IMR-90 (cell line): ENCODE measurements at regions of chr3 and their contacts with region 1.

Region 1: DNA sequence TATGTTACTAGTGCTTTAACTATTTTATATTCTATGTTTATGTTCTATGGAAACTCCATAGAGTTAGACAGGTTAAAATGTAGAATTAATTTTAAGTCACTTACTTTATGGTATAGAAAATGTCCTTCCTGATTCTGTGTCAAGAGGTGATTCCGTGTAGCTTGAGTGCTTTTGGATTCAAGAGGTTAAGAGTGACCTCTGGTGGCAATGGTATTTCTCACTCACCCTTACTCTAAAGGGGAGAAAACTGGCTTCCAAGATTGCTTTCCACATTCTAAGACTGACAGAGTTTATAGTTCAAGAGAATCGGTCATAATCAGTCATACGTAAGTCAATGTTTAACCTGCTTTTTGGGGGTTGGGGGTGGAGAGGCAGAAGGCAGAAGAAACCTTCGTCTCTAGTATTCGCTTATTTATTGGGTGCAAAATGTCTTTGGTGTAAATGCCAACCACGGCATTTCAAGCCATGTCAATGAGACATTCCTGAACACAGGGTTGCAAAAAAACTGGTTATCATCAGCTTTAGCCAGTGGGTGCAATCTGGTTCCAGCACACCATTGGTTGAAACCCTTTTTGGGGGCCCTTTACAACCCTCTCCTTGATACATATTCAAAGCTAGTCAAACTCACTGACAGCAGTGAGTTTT is 92.0 kb upstream of the VGLL3 start:
- DNase-seq: peak; percentile 75
- ATAC-seq: peak; percentile 98
- H3K4me3 ChIP-seq: no peak overlapping the region
- H3K27ac ChIP-seq: no peak overlapping the region
- H3K4me1 ChIP-seq: no peaks in the 10 kb centered on the region
- H3K27me3 ChIP-seq: no peaks in the 10 kb centered on the region
- CTCF ChIP-seq: peak; percentile 86
- POLR2A ChIP-seq: no peak
- RAD21 ChIP-seq: peak; percentile 89

Region 2: DNA sequence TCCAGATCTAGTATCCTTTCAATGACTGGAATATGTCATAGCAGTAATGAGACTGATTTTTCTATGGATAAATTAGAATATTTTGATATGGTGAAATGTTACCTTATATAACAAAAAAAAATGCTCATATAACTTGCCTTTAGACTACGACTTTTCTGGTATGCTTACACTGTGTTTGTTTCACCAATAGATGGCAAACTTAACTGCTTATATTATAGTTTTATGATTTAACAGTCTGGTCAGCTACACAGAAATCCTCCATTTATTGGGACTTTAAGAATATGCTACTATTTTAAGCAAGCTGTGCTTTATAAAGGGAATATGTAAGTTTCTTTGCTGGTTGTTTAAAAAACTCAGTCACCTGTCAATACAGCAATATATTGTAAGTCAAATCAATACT is 297.5 kb before region 1 on chr3:
- CTCF ChIA-PET with region 1: interaction called, 4 read pairs
- POLR2A ChIA-PET with region 1: interaction called, 3 read pairs
- dilution Hi-C with region 1: no loop called
- in situ Hi-C with region 1: loop called (anchors 5 kb)
- intact Hi-C with region 1: loop called (anchors 1 kb)
- DNase-seq: peak; percentile 72
- ATAC-seq: peak; percentile 93
- H3K4me3 ChIP-seq: no peak overlapping the region
- H3K27ac ChIP-seq: no peak overlapping the region
- H3K4me1 ChIP-seq: peaks cover 4% of the 10 kb centered on the region
- H3K27me3 ChIP-seq: no peaks in the 10 kb centered on the region
- CTCF ChIP-seq: peak; percentile 70
- POLR2A ChIP-seq: no peak
- RAD21 ChIP-seq: peak; percentile 73

Region 3: DNA sequence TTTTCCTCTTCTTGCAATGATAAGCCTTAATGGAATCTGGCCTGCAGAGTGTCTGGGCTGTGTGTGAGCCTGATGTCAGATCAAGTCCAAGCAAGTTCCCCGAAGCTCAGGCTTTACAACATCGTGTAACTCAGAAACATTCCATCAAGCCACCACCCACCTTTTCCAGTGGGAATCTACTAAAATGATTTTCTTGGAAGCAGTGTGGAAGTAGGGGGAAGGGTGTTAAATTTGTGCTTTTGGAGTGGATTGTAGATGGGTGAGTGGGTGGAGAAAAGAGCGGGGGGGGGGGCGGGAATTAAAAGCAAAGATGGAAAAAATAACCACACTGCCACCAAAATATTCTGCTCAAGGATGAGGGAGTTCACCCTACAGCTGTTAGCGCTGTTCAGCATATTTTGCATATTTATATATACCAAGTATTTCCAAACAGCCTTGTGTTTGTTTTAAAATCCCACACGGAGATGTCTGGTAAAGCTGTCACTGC is 145.6 kb before region 1 on chr3:
- CTCF ChIA-PET with region 1: no interaction called
- POLR2A ChIA-PET with region 1: no interaction called
- dilution Hi-C with region 1: no loop called
- in situ Hi-C with region 1: no loop called
- intact Hi-C with region 1: loop called (anchors 1 kb)
- DNase-seq: peak; percentile 92
- ATAC-seq: peak; percentile 76
- H3K4me3 ChIP-seq: no peak overlapping the region
- H3K27ac ChIP-seq: peak overlapping the region; percentile 99
- H3K4me1 ChIP-seq: peaks cover 7% of the 10 kb centered on the region
- H3K27me3 ChIP-seq: no peaks in the 10 kb centered on the region
- CTCF ChIP-seq: no peak
- POLR2A ChIP-seq: peak; percentile 33; the same call in 1 of the 2 replicates
- RAD21 ChIP-seq: no peak

Region 4: DNA sequence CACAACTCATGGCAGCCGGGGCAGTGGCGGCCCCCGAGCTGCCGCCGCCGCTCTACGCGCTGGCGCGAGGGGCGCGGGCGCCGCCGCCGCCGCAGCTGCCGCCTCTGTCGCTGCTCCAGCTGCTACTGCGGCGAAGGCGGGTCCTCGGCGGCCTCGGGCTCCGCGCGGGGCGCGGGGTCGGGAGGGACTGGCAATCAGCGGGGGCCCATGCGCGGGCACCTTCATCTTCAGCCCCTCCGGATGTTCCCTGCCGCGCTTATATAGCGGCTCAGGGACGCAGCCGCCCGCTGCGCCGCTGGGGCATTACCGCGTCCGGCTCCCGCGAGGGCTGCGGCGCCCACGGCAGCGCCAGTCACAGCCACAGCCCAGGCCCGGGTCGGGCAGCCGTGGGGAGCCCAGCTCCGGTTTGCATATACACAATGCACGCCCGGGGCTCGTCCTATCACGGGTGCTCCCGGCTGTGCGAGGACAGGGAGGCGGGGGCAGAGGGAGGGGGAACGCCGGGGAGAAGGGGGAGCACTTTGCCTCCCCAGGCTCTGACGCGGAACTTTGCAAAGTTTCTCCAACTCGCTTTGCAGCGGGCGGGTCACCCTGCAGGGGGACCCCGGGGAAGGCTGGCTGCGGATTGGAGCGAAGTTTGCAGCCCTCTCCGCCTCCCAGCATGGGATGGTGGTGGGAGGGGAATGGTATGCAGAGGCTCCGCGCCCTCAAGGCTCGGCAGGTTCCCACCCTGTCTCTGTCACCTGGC is 92.0 kb before region 1 on chr3 and contains the start of gene VGLL3:
- CTCF ChIA-PET with region 1: no interaction called
- POLR2A ChIA-PET with region 1: no interaction called
- dilution Hi-C with region 1: no loop called
- in situ Hi-C with region 1: loop called (anchors 5 kb)
- intact Hi-C with region 1: loop called (anchors 5 kb)
- DNase-seq: peak; percentile 87
- ATAC-seq: peak; percentile 85
- H3K4me3 ChIP-seq: peak within 1 kb of the TSS; percentile 99
- H3K27ac ChIP-seq: peak within 1 kb of the TSS; percentile 97
- H3K4me1 ChIP-seq: peaks cover 6% of the 10 kb centered on the region
- H3K27me3 ChIP-seq: no peaks in the 10 kb centered on the region
- CTCF ChIP-seq: peak; percentile 25
- POLR2A ChIP-seq: peak; percentile 92
- RAD21 ChIP-seq: no peak
- total RNA-seq, gene VGLL3: 96.7 and 97.3 TPM in 2 replicates

Region 5: GRCh38 chr3:87052499-87053260 is 30.2 kb before region 1 on chr3:
- CTCF ChIA-PET with region 1: no interaction called
- POLR2A ChIA-PET with region 1: no interaction called
- dilution Hi-C with region 1: no loop called
- in situ Hi-C with region 1: no loop called
- intact Hi-C with region 1: no loop called
- DNase-seq: no peak
- ATAC-seq: no peak
- H3K4me3 ChIP-seq: no peak overlapping the region
- H3K27ac ChIP-seq: no peak overlapping the region
- H3K4me1 ChIP-seq: no peaks in the 10 kb centered on the region
- H3K27me3 ChIP-seq: no peaks in the 10 kb centered on the region
- CTCF ChIP-seq: no peak
- POLR2A ChIP-seq: no peak
- RAD21 ChIP-seq: no peak

Region 6: GRCh38 chr3:87062685-87063084 is 20.2 kb before region 1 on chr3:
- CTCF ChIA-PET with region 1: no interaction called
- POLR2A ChIA-PET with region 1: no interaction called
- dilution Hi-C with region 1: no loop called
- in situ Hi-C with region 1: no loop called
- intact Hi-C with region 1: no loop called
- DNase-seq: no peak
- ATAC-seq: no peak
- H3K4me3 ChIP-seq: no peak overlapping the region
- H3K27ac ChIP-seq: no peak overlapping the region
- H3K4me1 ChIP-seq: no peaks in the 10 kb centered on the region
- H3K27me3 ChIP-seq: peaks cover 6% of the 10 kb centered on the region
- CTCF ChIP-seq: no peak
- POLR2A ChIP-seq: no peak
- RAD21 ChIP-seq: no peak

Region 7: DNA sequence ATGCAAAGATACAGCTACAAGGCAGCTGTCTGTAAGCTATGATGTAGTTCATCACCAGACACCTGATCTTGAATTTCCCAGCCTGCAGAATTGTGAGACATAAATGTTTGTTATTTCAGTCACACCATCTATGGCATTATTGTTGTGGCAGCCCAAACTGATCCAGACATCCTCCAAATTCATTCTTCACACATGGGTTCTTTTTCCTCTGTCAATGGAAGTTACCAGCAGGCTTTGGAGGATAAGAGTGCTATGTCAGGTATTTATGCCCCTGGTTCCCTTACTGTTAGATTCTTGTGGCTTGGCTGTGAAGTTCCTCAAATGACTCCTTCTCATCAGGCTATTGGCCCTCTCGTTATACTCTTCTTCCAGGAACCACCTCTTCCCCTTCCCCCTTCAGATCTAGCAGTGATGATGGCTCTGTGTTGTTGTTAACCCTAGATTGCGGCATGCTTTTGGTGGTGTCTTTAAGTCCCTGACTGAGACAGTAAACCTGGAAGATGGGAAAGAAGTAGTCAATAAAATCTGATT is 53.2 kb after region 1 on chr3:
- CTCF ChIA-PET with region 1: no interaction called
- POLR2A ChIA-PET with region 1: no interaction called
- dilution Hi-C with region 1: no loop called
- in situ Hi-C with region 1: no loop called
- intact Hi-C with region 1: no loop called
- DNase-seq: no peak
- ATAC-seq: no peak
- H3K4me3 ChIP-seq: no peak overlapping the region
- H3K27ac ChIP-seq: no peak overlapping the region
- H3K4me1 ChIP-seq: no peaks in the 10 kb centered on the region
- H3K27me3 ChIP-seq: peaks cover 2% of the 10 kb centered on the region; the same call in 1 of the 2 replicates
- CTCF ChIP-seq: no peak
- POLR2A ChIP-seq: no peak
- RAD21 ChIP-seq: no peak